Left cardiac atrium (tissue), 4 donors: ENCODE measurements at regions of chr22 and their contacts with region 1.

Region 1: GRCh38 chr22:24189249-24190158 is 8.2 kb downstream of the SUSD2 start:
- DNase-seq: peak; percentile 81
- ATAC-seq: peak; percentile 92 to 93

Region 2: GRCh38 chr22:23984430-23984829 is 205.1 kb before region 1 on chr22:
- intact Hi-C with region 1: loop called in 1 of 2 experiments (anchors 10 kb)
- DNase-seq: no peak
- ATAC-seq: no peak

Region 3: DNA sequence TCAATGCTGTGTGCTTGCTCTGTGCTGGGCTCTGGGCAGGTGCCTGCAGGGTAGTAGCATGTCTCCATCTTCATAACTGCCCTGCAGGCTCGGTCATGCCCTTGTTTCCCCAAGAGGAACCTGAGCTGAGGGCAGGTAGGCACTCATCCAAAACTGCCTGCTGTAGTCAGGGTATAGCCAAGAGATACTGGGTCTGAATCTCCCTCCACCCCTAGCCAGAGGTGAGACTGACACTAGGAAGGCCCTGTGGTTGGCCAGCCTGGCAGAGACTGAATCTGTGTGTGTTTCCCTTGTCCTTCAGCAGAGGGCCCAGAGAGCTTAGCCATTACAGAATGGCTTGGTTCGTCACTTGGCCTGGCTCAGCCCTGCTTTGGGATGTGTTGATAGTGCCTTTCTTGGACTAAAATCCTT is 87.6 kb before region 1 on chr22:
- intact Hi-C with region 1: no loop called
- DNase-seq: peak; percentile 57
- ATAC-seq: peak; percentile 75 to 86

Region 4: GRCh38 chr22:24247011-24247507 is 57.6 kb after region 1 on chr22:
- intact Hi-C with region 1: loop called in 1 of 2 experiments (anchors 2 kb)
- DNase-seq: peak; percentile 48
- ATAC-seq: peak in 1 of 2 donors; percentile 18